H1 (cell line): ENCODE measurements at regions of chr3 and their contacts with region 1.

Region 1: GRCh38 chr3:11601446-11602238 is 42.1 kb downstream of the VGLL4 start:
- DNase-seq: no peak
- H3K4me3 ChIP-seq: no peak overlapping the region
- H3K27ac ChIP-seq: no peak overlapping the region
- H3K4me1 ChIP-seq: peaks cover 4 to 21% (median 17%) of the 10 kb centered on the region in 4 experiments
- H3K27me3 ChIP-seq: no peaks in the 10 kb centered on the region
- CTCF ChIP-seq: no peak
- EP300 ChIP-seq: no peak
- POLR2A ChIP-seq: no peak
- RAD21 ChIP-seq: no peak

Region 2: DNA sequence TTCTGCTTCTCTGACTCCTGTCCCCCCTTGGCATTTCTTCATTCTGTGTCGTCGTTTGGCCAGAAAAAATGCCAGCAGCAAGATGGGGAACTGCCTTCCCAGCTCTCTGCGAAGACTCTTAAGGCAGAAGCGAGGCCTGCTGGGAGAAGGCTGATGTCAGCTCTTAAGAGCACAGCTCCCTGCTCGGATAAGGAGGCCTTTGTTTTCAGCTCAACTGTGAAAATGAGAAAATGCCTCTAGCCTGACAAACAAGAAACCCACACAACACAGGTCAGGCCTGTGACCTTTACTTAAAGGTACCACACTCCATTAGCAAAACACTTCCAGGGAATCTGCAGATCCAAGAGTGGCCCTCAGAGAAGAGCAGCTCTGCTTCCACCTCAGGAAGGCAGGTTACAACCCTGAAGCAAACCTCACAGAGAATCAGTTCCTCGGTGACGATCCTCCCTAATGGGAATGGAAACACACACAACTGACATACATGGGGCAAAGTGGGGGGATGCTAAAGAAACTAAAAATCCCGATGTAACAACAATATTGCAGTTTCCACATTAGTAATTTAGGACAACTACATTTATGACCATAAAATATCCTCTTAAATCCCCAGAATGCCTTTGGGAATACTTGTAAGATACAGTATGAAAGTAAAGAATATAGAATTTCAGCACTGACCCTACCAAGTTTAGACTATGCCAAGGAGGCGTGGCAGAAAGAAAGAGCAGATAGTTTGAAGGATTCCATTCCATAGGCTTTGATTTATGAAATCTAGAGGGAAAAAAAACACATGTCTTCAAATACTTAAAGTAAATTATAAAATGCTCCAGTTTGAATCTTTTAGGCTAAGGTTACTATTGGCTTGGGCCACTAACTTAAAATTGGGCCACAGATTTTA is 10.0 kb before region 1 on chr3:
- CTCF ChIA-PET with region 1: interaction called, 5 read pairs
- POLR2A ChIA-PET with region 1: interaction called, 11 read pairs
- DNase-seq: peak in 1 of 2 experiments; percentile 53
- H3K4me3 ChIP-seq: no peak overlapping the region
- H3K27ac ChIP-seq: peak overlapping the region; percentile 54
- H3K4me1 ChIP-seq: peaks cover 25 to 46% (median 39%) of the 10 kb centered on the region in 4 experiments
- H3K27me3 ChIP-seq: no peaks in the 10 kb centered on the region
- CTCF ChIP-seq: no peak
- EP300 ChIP-seq: no peak
- POLR2A ChIP-seq: no peak
- RAD21 ChIP-seq: no peak; a peak in 1 of 4 replicates

Region 3: DNA sequence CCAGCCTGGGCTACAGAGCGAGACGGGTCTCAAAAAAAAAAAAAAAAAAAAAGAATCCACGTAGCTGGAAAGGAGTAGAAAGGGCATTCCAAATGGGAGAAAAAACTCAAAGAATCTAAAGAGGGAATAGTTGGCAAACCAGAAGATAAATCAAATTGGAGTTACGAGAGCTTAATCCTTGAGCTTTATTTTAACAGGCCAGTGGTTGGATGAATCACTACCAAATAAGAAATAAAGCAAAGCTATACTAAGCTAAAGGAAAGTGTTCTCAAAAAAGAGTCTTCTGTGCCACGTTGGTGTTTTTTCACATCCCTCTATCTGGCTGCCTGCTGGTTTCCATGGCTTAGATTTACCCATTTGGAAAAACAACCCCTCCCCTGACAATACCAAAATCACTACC is 28.1 kb after region 1 on chr3:
- CTCF ChIA-PET with region 1: no interaction called
- POLR2A ChIA-PET with region 1: no interaction called
- DNase-seq: no peak
- H3K4me3 ChIP-seq: no peak overlapping the region
- H3K27ac ChIP-seq: no peak overlapping the region
- H3K4me1 ChIP-seq: no peaks in the 10 kb centered on the region
- H3K27me3 ChIP-seq: no peaks in the 10 kb centered on the region
- CTCF ChIP-seq: no peak
- EP300 ChIP-seq: no peak
- POLR2A ChIP-seq: no peak
- RAD21 ChIP-seq: no peak